Spleen (tissue), 13 donors: ENCODE measurements at regions of chr9 and their contacts with region 1.

Region 1: DNA sequence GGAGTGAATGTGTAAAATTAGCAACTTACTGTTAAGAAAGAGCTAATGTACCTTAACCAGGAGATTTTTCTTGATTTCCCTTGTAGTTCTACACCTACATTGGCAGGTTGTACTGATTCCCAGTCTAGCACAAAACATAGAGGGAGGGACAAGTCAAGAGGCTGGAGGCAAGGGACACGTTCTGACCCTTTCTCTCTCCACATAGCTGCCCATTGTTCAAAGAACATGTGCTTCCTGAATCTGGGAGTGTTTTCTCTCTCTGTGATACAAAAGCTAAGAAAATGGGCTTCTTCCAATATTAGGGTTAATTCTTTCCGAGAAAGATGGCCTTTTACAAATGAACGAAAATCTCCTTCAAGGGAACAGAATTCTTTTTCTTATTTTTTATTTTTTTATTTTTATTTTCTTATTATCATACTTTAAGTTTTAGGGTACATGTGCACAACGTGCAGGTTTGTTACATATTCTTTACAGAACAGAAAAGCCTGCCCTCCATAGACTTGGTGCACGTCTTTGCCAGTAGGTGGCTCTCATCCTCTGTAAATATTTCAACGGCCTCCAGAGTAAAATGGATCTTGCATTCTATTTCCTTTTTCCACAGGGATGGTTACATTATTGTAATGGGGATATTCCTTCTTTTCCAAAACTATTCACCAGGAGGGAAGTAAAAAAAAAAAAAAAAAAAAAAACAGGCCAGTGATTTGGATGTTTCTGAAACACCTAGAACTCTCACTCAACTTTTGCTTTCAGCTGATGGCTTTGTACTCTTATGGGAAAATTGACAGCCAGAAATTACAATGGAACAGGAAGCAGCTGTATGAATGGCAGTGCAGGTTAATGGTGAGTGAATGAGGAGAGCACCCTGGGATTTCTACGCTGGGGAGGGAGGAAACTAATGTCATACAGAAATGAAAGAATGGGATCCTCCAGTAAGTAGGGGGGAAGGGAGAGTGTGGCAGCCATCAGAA is 13.1 kb upstream of the IFNA5 start:
- DNase-seq: no peak
- H3K4me3 ChIP-seq: no peak overlapping the region
- H3K27ac ChIP-seq: no peak overlapping the region
- H3K4me1 ChIP-seq: peaks cover 0 to 14% (median 2%) of the 10 kb centered on the region in 6 donors
- H3K27me3 ChIP-seq: no peaks in the 10 kb centered on the region
- CTCF ChIP-seq: peak; percentile 31 to 72 (median 59)
- POLR2A ChIP-seq: no peak

Region 2: GRCh38 chr9:21110708-21111576 is 207.3 kb before region 1 on chr9:
- intact Hi-C with region 1: no loop called
- DNase-seq: no peak
- H3K4me3 ChIP-seq: no peak overlapping the region
- H3K27ac ChIP-seq: no peak overlapping the region
- H3K4me1 ChIP-seq: no peaks in the 10 kb centered on the region
- H3K27me3 ChIP-seq: no peaks in the 10 kb centered on the region
- CTCF ChIP-seq: peak; percentile 47 to 87 (median 78)
- POLR2A ChIP-seq: no peak

Region 3: DNA sequence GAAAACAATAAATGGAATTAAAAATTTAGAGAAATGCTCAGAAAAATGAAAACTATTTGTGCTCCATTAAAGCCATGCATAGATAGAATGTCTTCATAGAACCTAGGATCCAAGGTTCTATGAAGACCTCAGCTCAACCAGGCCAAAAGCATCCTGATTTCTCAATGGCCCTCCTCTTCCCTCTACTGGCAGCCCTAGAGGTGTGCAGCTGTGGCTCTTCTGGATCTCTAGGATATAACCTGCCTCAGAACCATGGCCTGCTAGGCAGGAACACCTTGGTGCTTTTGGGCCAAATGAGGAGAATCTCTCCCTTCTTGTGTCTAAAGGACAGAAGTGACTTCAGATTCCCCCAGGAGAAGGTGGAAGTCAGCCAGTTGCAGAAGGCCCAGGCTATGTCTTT is 137.1 kb after region 1 on chr9:
- intact Hi-C with region 1: loop called (anchors 10 kb)
- DNase-seq: no peak
- H3K4me3 ChIP-seq: no peak overlapping the region
- H3K27ac ChIP-seq: no peak overlapping the region
- H3K4me1 ChIP-seq: no peaks in the 10 kb centered on the region
- H3K27me3 ChIP-seq: peaks cover 0 to 13% (median 0%) of the 10 kb centered on the region in 7 donors
- CTCF ChIP-seq: peak; percentile 30 to 72 (median 61)
- POLR2A ChIP-seq: no peak